ENCODE measurements at regions of chrX and their contacts with region 1.

Region 1: GRCh38 chrX:154804957-154805695 is at the start of gene MPP1:
- DNase-seq: peak; percentile 71
- H3K4me3 Mint-ChIP-seq: peak within 1 kb of the TSS; percentile 80
- H3K27ac Mint-ChIP-seq: peak within 1 kb of the TSS; percentile 85
- H3K4me1 Mint-ChIP-seq: peaks cover 8% of the 10 kb centered on the region
- H3K27me3 Mint-ChIP-seq: no peaks in the 10 kb centered on the region
- CTCF ChIP-seq: no peak
- total RNA-seq, gene MPP1: 11.8 and 12.7 TPM in 2 replicates

Region 2: GRCh38 chrX:153055871-153056749 is 1749.0 kb before region 1 on chrX and contains the start of gene PNMA3:
- CTCF ChIA-PET with region 1: no interaction called
- POLR2A ChIA-PET with region 1: no interaction called
- intact Hi-C with region 1: no loop called
- DNase-seq: no peak
- H3K4me3 Mint-ChIP-seq: no peak within 1 kb of the TSS
- H3K27ac Mint-ChIP-seq: no peak within 1 kb of the TSS
- H3K4me1 Mint-ChIP-seq: no peaks in the 10 kb centered on the region
- H3K27me3 Mint-ChIP-seq: peaks cover 17% of the 10 kb centered on the region
- CTCF ChIP-seq: no peak
- total RNA-seq, gene PNMA3: not detected in 2 replicates

Region 3: DNA sequence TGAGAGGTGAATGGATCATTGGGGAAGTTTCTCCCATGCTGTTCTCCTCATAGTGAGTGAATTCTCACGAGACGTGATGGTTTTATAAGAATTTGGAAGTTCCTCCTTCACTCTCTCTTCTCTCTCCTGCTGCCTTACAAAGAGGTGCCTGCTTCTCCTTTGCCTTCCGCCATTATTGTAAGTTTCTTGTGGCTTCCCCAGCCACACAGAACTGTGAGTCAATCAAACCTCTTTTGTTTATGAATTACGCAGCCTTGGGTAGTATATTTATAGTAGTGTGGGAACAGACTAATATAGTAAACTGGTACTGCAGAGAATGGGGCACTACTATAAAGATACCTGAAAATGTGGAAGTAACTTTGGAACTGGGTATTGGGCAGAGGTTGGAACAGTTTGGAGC is 144.0 kb before region 1 on chrX:
- CTCF ChIA-PET with region 1: no interaction called
- POLR2A ChIA-PET with region 1: no interaction called
- intact Hi-C with region 1: no loop called
- DNase-seq: no peak
- H3K4me3 Mint-ChIP-seq: no peak overlapping the region
- H3K27ac Mint-ChIP-seq: no peak overlapping the region
- H3K4me1 Mint-ChIP-seq: no peaks in the 10 kb centered on the region
- H3K27me3 Mint-ChIP-seq: no peaks in the 10 kb centered on the region
- CTCF ChIP-seq: no peak

Region 4: GRCh38 chrX:154824638-154825037 is 19.5 kb after region 1 on chrX:
- CTCF ChIA-PET with region 1: interaction called, 4 read pairs
- POLR2A ChIA-PET with region 1: interaction called, 18 read pairs
- intact Hi-C with region 1: no loop called
- DNase-seq: peak; percentile 88
- H3K4me3 Mint-ChIP-seq: no peak overlapping the region
- H3K27ac Mint-ChIP-seq: no peak overlapping the region
- H3K4me1 Mint-ChIP-seq: no peaks in the 10 kb centered on the region
- H3K27me3 Mint-ChIP-seq: peaks cover 45% of the 10 kb centered on the region
- CTCF ChIP-seq: no peak

Region 5: GRCh38 chrX:154855256-154855655 is 50.1 kb after region 1 on chrX:
- CTCF ChIA-PET with region 1: no interaction called
- POLR2A ChIA-PET with region 1: no interaction called
- intact Hi-C with region 1: no loop called
- DNase-seq: no peak
- H3K4me3 Mint-ChIP-seq: no peak overlapping the region
- H3K27ac Mint-ChIP-seq: no peak overlapping the region
- H3K4me1 Mint-ChIP-seq: no peaks in the 10 kb centered on the region
- H3K27me3 Mint-ChIP-seq: peaks cover 3% of the 10 kb centered on the region
- CTCF ChIP-seq: no peak

Region 6: GRCh38 chrX:154890990-154891639 is 86.0 kb after region 1 on chrX:
- CTCF ChIA-PET with region 1: no interaction called
- POLR2A ChIA-PET with region 1: no interaction called
- intact Hi-C with region 1: no loop called
- DNase-seq: no peak
- H3K4me3 Mint-ChIP-seq: no peak overlapping the region
- H3K27ac Mint-ChIP-seq: no peak overlapping the region
- H3K4me1 Mint-ChIP-seq: no peaks in the 10 kb centered on the region
- H3K27me3 Mint-ChIP-seq: peaks cover 35% of the 10 kb centered on the region
- CTCF ChIP-seq: no peak